ENCODE measurements at regions of chr2 and their contacts with region 1.

Region 1: GRCh38 chr2:74482801-74483674 is at the starts of genes CCDC142 and TTC31:
- DNase-seq: peak; percentile 83 to 96
- H3K4me3 ChIP-seq: peak within 1 kb of the TSS; percentile 69 to 99 (median 93)
- H3K27ac ChIP-seq: peak within 1 kb of the TSS; percentile 92
- H3K4me1 ChIP-seq: peaks cover 0 to 10% (median 4%) of the 10 kb centered on the region in 4 experiments; a peak in 4 of 7 replicates
- H3K27me3 ChIP-seq: no peaks in the 10 kb centered on the region; a peak in 1 of 7 replicates
- CTCF ChIP-seq: peak; percentile 81 to 95 (median 89)
- EP300 ChIP-seq: no peak
- POLR2A ChIP-seq: peak in 1 of 2 experiments; percentile 91; a peak in 2 of 3 replicates
- RAD21 ChIP-seq: peak; percentile 79 to 85
- total RNA-seq, gene CCDC142: 10.7 and 12.1 TPM in 2 replicates
- total RNA-seq, gene TTC31: 27.4 and 28.8 TPM in 2 replicates

Region 2: DNA sequence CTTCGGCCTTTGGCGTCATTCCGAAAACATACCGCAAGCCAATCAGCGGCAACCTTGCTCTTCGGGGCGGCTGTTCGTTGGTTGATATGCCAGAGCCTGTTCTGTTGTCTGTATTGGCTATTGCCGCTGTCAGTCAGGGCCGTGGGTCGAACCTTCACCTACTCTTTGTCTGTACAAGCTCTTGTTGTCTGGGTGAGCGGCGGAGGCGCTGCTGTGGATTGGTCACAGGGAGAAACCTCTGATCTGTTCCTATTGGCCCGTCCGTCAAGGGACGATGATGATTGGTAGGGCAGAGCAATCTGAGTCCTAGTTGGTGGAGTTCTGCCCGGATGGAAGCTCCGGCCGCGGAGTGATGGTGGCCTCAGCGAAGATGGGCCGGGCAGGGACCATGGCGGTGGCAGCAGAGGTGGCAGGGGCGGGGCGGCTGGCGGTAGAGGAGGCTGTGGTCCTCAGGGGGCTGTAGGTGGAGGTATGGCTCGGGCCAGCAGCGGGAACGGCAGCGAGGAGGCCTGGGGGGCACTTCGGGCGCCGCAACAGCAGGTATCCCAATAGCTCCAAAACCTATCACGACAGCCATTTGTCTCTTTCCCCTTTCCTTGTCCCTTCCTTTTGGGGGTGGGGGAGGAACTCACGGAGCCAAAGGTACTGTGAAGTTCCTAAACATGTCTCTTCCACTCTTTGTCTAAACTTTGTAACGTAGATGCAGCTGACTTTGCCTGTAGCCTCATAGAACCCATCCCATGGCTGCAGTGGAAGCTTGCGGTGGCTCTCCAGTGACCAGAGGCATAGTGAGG is 24.7 kb before region 1 on chr2 and contains the start of gene WBP1:
- CTCF ChIA-PET with region 1: interaction called, 73 read pairs
- POLR2A ChIA-PET with region 1: interaction called, 85 read pairs
- DNase-seq: peak; percentile 98 to 100
- H3K4me3 ChIP-seq: peak within 1 kb of the TSS; percentile 83 to 99 (median 98)
- H3K27ac ChIP-seq: peak within 1 kb of the TSS; percentile 95
- H3K4me1 ChIP-seq: peaks cover 0 to 10% (median 2%) of the 10 kb centered on the region in 4 experiments; a peak in 5 of 7 replicates
- H3K27me3 ChIP-seq: no peaks in the 10 kb centered on the region
- CTCF ChIP-seq: no peak
- EP300 ChIP-seq: no peak
- POLR2A ChIP-seq: peak in 1 of 2 experiments; percentile 83; a peak in 2 of 3 replicates
- RAD21 ChIP-seq: no peak
- total RNA-seq, gene WBP1: 51.4 and 57.2 TPM in 2 replicates

Region 3: DNA sequence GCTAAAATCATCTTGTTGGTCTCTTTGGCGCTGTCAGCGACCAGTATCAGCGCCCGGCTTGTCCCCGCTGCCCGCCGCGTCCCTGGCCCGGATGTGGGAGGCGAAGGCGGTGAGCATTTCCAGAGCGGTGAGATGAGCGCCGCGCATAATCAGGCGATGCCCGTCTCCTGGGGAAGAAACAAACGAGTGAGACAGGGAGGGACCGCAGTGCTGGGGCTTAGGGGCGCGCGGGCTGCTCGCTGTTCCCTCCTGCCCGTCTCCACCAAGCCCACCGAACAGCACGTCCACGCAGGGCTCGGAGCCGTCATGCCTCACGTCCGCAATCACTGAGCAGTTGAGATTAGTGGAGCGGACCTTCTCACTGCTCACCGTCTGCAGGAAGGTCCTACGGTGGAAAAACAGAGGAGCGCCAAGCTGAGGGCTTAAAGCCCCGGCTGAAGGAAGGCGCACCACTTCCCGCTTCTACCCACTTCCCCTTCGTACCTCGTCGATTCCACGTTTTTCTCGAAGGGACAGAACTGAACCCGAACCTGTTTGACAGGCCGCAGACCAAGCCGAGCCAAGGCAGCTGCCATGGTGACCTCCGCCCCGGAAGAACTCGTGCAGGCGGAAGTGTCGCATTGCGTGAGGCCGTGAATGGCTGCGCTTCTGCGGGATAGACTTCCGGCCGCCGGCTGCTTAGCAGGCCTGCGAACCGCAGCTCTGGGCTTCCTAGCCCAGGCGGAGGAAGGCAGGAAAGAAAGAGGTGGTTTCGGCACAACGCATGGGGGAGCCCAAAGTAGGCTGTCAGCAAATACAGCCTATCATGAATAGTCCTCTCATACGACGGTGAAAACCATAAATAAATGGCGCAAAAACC is 10.7 kb before region 1 on chr2 and contains the start of gene MRPL53:
- CTCF ChIA-PET with region 1: interaction called, 35 read pairs
- POLR2A ChIA-PET with region 1: interaction called, 43 read pairs
- DNase-seq: peak; percentile 84 to 94
- H3K4me3 ChIP-seq: peak within 1 kb of the TSS; percentile 77 to 95 (median 87)
- H3K27ac ChIP-seq: peak within 1 kb of the TSS; percentile 79
- H3K4me1 ChIP-seq: peaks cover 0 to 3% (median 2%) of the 10 kb centered on the region in 4 experiments; a peak in 3 of 7 replicates
- H3K27me3 ChIP-seq: no peaks in the 10 kb centered on the region
- CTCF ChIP-seq: no peak
- EP300 ChIP-seq: 0 out of 3 replicates have a peak, but pooled peaks of 1 of the 2 experiments have one; percentile 46
- POLR2A ChIP-seq: peak; percentile 80 to 95
- RAD21 ChIP-seq: no peak
- total RNA-seq, gene MRPL53: 46.3 and 50.2 TPM in 2 replicates

Region 4: GRCh38 chr2:74507145-74507925 is 24.3 kb after region 1 on chr2 and contains the start of gene PCGF1:
- CTCF ChIA-PET with region 1: interaction called, 15 read pairs
- POLR2A ChIA-PET with region 1: interaction called, 59 read pairs
- DNase-seq: peak; percentile 96 to 98
- H3K4me3 ChIP-seq: peak within 1 kb of the TSS; percentile 61 to 98 (median 92)
- H3K27ac ChIP-seq: peak within 1 kb of the TSS; percentile 99
- H3K4me1 ChIP-seq: peaks cover 3 to 25% (median 20%) of the 10 kb centered on the region in 4 experiments
- H3K27me3 ChIP-seq: peaks cover 48 to 80% (median 76%) of the 10 kb centered on the region in 4 experiments
- CTCF ChIP-seq: peak in 2 of 3 experiments; percentile 48 to 63; a peak in 3 of 4 replicates
- EP300 ChIP-seq: no peak
- POLR2A ChIP-seq: peak in 1 of 2 experiments; percentile 84; a peak in 2 of 3 replicates
- RAD21 ChIP-seq: peak; percentile 9 to 28; a peak in 1 of 4 replicates
- total RNA-seq, gene PCGF1: 10.0 and 13.8 TPM in 2 replicates

Region 5: GRCh38 chr2:74554646-74555531 is 71.9 kb after region 1 on chr2 and contains the start of gene DOK1:
- CTCF ChIA-PET with region 1: interaction called, 10 read pairs
- POLR2A ChIA-PET with region 1: interaction called, 6 read pairs
- DNase-seq: peak in 1 of 2 experiments; percentile 76
- H3K4me3 ChIP-seq: peak within 1 kb of the TSS; percentile 83 to 94 (median 90)
- H3K27ac ChIP-seq: 0 out of 2 replicates have a peak within 1 kb of the TSS, but pooled peaks have one; percentile 11
- H3K4me1 ChIP-seq: peaks cover 2 to 10% (median 7%) of the 10 kb centered on the region in 4 experiments
- H3K27me3 ChIP-seq: peaks cover 4 to 50% (median 33%) of the 10 kb centered on the region in 4 experiments
- CTCF ChIP-seq: no peak
- EP300 ChIP-seq: no peak
- POLR2A ChIP-seq: no peak; a peak in 1 of 3 replicates
- RAD21 ChIP-seq: no peak
- total RNA-seq, gene DOK1: 11.4 and 14.3 TPM in 2 replicates